PC-9 (cell line): ENCODE measurements at regions of chr16 and their contacts with region 1.

Region 1: GRCh38 chr16:3861808-3862451 is 18.6 kb downstream of the CREBBP start:
- DNase-seq: no peak
- H3K4me3 ChIP-seq: no peak overlapping the region
- H3K27ac ChIP-seq: no peak overlapping the region
- H3K4me1 ChIP-seq: no peaks in the 10 kb centered on the region
- H3K27me3 ChIP-seq: no peaks in the 10 kb centered on the region
- CTCF ChIP-seq: no peak

Region 2: DNA sequence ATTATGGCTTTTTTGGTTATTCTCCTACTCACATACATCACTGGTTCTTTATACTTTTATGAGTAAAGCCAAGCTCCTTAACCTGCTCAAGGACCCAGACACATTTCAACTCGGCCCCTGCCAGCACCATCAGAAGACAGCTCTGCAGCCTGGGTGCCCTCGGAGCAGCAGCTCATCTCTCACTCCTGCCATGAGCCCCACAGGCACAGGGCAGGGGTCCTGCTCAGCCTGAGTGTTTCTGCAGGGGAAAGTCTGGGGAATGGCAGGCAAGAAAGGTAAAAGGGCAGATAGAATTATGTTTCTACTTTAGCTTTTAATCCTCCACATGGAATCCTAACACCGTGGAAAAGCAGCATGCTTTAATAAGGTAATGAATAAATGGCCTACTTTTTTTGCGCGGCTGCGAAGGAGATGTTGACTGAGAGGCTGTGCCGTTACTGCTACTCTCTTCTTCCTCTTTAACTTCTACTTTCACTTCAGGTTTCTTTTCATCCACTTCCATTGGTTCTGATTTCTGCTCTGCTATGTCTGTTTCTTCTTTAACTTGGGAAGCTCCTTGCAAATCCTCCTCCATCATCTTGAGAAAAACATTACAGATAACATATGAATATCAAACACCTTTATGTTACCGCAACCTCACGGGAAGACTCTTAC is 94.5 kb before region 1 on chr16:
- CTCF ChIA-PET with region 1: no interaction called
- POLR2A ChIA-PET with region 1: interaction called, 18 read pairs
- intact Hi-C with region 1: no loop called
- DNase-seq: no peak
- H3K4me3 ChIP-seq: no peak overlapping the region
- H3K27ac ChIP-seq: no peak overlapping the region
- H3K4me1 ChIP-seq: peaks cover 9% of the 10 kb centered on the region
- H3K27me3 ChIP-seq: no peaks in the 10 kb centered on the region
- CTCF ChIP-seq: no peak

Region 3: GRCh38 chr16:3890091-3890490 is 28.2 kb after region 1 on chr16:
- CTCF ChIA-PET with region 1: no interaction called
- POLR2A ChIA-PET with region 1: no interaction called
- intact Hi-C with region 1: no loop called
- DNase-seq: no peak
- H3K4me3 ChIP-seq: no peak overlapping the region
- H3K27ac ChIP-seq: no peak overlapping the region
- H3K4me1 ChIP-seq: no peaks in the 10 kb centered on the region
- H3K27me3 ChIP-seq: peaks cover 14% of the 10 kb centered on the region; the same call in 1 of the 2 replicates
- CTCF ChIP-seq: no peak